H1 (cell line): ENCODE measurements at regions of chr10 and their contacts with region 1.

Region 1: DNA sequence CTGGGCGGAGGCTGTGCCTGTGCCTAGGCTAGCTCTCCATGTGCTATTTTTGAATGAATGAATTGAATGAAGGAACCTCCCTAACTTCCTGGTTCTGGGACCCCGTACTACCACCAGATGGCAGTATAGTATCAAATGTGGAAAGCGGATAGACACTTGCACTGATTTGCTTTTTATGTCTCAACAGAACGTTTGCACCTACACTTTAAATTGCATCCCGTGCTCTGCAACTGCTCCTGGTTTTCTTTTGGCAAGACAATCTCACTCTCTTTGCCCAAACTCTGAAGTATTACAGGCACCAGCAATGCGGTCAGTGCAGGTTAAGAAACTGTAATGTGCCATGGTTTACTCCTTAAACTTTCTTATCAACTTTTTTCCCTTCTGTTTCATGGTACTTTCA is 6.5 kb downstream of the FZD8 start:
- DNase-seq: peak in 1 of 2 experiments; percentile 62
- H3K4me3 ChIP-seq: no peak overlapping the region
- H3K27ac ChIP-seq: no peak overlapping the region
- H3K4me1 ChIP-seq: peaks cover 2 to 20% (median 13%) of the 10 kb centered on the region in 4 experiments
- H3K27me3 ChIP-seq: peaks cover 3 to 7% (median 5%) of the 10 kb centered on the region in 4 experiments; a peak in 6 of 7 replicates
- CTCF ChIP-seq: peak in 2 of 3 experiments; percentile 74 to 85; a peak in 3 of 4 replicates
- EP300 ChIP-seq: no peak
- POLR2A ChIP-seq: no peak
- RAD21 ChIP-seq: peak; percentile 97

Region 2: DNA sequence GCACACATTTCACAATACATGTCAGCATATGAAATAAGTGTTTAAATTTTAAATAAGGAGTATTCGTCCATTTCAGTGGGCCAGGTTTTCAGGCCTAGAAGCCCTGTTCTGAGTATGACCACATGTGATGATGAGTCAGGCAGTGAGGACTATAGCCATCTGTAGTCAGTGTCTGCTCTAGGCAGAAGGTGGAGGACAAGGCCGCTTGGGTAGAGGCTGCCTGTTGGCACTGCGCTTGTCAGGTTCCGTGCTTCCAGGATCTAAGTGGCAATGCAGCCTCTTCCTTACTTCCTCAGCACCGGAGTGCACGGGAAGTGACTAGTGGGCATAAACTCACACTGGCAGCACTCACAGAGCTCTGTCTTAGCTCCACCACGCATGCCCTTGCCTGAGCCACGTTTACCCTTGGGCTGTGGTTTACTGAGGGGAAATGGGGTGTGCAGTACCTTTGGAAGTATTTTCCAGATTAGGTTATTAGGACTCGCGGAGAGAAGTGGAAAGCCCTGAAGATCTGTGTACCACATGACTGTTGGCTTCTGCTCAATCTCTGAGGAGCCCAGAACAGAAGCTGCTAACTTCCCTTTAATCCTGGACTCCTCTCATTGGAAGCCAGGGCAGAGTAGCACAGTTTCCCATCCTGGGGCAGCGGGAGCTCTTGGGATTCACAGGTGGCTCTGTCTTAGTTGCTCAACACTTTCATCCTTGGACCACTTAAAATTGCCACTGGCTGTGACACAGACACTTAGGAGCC is 118.0 kb before region 1 on chr10:
- CTCF ChIA-PET with region 1: no interaction called
- POLR2A ChIA-PET with region 1: no interaction called
- DNase-seq: no peak
- H3K4me3 ChIP-seq: no peak overlapping the region
- H3K27ac ChIP-seq: no peak overlapping the region
- H3K4me1 ChIP-seq: peaks cover 0 to 9% (median 6%) of the 10 kb centered on the region in 4 experiments; a peak in 6 of 7 replicates
- H3K27me3 ChIP-seq: no peaks in the 10 kb centered on the region
- CTCF ChIP-seq: no peak
- EP300 ChIP-seq: no peak
- POLR2A ChIP-seq: no peak
- RAD21 ChIP-seq: no peak

Region 3: GRCh38 chr10:35661236-35661635 is 25.7 kb after region 1 on chr10:
- CTCF ChIA-PET with region 1: no interaction called
- POLR2A ChIA-PET with region 1: no interaction called
- DNase-seq: no peak
- H3K4me3 ChIP-seq: no peak overlapping the region
- H3K27ac ChIP-seq: no peak overlapping the region
- H3K4me1 ChIP-seq: peaks cover 2 to 7% (median 5%) of the 10 kb centered on the region in 4 experiments; a peak in 2 of 7 replicates
- H3K27me3 ChIP-seq: no peaks in the 10 kb centered on the region
- CTCF ChIP-seq: no peak
- EP300 ChIP-seq: no peak
- POLR2A ChIP-seq: no peak
- RAD21 ChIP-seq: no peak

Region 4: GRCh38 chr10:36779234-36779846 is 1143.8 kb after region 1 on chr10:
- CTCF ChIA-PET with region 1: interaction called, 42 read pairs
- POLR2A ChIA-PET with region 1: no interaction called
- DNase-seq: peak in 1 of 2 experiments; percentile 9
- H3K4me3 ChIP-seq: no peak overlapping the region
- H3K27ac ChIP-seq: no peak overlapping the region
- H3K4me1 ChIP-seq: no peaks in the 10 kb centered on the region
- H3K27me3 ChIP-seq: no peaks in the 10 kb centered on the region
- CTCF ChIP-seq: peak; percentile 14 to 75 (median 71)
- EP300 ChIP-seq: no peak
- POLR2A ChIP-seq: no peak
- RAD21 ChIP-seq: peak; percentile 94 to 96